Naive thymus-derived CD4-positive, alpha-beta T cell (primary cell): ENCODE measurements at regions of chr7 and their contacts with region 1.

Region 1: GRCh38 chr7:52973126-52973525 is 62.3 kb upstream of the POM121L12 start:
- DNase-seq: no peak
- ATAC-seq: no peak
- H3K4me3 ChIP-seq: no peak overlapping the region
- H3K4me3 Mint-ChIP-seq: no peak overlapping the region
- H3K27ac ChIP-seq: no peak overlapping the region
- H3K27ac Mint-ChIP-seq: no peak overlapping the region
- H3K4me1 ChIP-seq: no peaks in the 10 kb centered on the region
- H3K4me1 Mint-ChIP-seq: no peaks in the 10 kb centered on the region
- H3K27me3 ChIP-seq: no peaks in the 10 kb centered on the region
- H3K27me3 Mint-ChIP-seq: no peaks in the 10 kb centered on the region

Region 2: GRCh38 chr7:53035499-53036412 is 62.6 kb after region 1 on chr7 and contains the start of gene POM121L12:
- CTCF ChIA-PET with region 1: no interaction called
- POLR2A ChIA-PET with region 1: no interaction called
- intact Hi-C with region 1: loop called in 1 of 2 experiments (anchors 10 kb)
- DNase-seq: no peak
- ATAC-seq: no peak
- H3K4me3 ChIP-seq: no peak within 1 kb of the TSS
- H3K4me3 Mint-ChIP-seq: no peak within 1 kb of the TSS
- H3K27ac ChIP-seq: no peak within 1 kb of the TSS
- H3K27ac Mint-ChIP-seq: no peak within 1 kb of the TSS
- H3K4me1 ChIP-seq: no peaks in the 10 kb centered on the region
- H3K4me1 Mint-ChIP-seq: no peaks in the 10 kb centered on the region
- H3K27me3 ChIP-seq: no peaks in the 10 kb centered on the region
- H3K27me3 Mint-ChIP-seq: no peaks in the 10 kb centered on the region
- total RNA-seq, gene POM121L12: not detected